Ovary (tissue), 10 donors: ENCODE measurements at regions of chr9 and their contacts with region 1.

Region 1: DNA sequence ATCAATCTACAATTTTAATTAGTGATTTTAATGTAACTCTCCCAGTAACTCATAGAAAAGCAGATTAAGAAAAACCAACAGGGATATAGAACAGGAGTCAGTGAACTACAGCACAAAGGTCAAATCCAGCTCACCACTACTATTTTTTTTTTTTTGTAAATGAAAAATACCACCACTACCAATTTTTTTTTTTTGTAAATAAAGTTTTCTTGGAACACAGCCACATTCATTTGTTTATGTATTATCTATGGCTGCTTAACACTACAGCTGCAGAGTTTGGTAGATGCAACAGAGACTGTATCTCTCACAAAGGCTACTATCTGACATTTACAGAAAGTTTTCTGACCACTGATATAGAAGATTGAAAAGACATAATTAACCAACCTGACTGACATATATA is 11.7 kb downstream of the ZNF510 start:
- DNase-seq: no peak
- H3K4me3 ChIP-seq: no peak overlapping the region
- H3K27ac ChIP-seq: no peak overlapping the region
- H3K4me1 ChIP-seq: no peaks in the 10 kb centered on the region
- H3K27me3 ChIP-seq: no peaks in the 10 kb centered on the region
- CTCF ChIP-seq: no peak
- EP300 ChIP-seq: no peak
- POLR2A ChIP-seq: no peak

Region 2: DNA sequence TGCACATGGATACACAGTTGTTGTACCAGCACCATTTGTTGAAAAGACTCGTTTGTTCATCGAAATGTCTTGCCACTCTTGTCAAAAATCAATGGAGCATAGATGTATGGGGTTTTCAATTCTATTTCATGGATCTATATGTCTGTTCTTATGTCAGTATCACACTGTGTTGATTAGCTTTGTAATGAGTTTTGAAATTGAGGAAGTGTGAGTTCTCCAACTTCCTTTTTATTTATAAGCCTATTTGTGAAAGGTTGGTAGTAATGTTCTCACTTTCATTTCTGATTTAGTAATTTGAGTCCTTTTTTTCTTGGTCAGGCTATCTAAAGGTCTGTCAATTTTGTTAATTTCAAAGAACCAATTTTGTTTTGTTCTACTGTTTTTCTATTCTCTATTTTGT is 14.4 kb before region 1 on chr9:
- intact Hi-C with region 1: loop called in 1 of 4 experiments (anchors 2 kb)
- DNase-seq: no peak
- H3K4me3 ChIP-seq: no peak overlapping the region
- H3K27ac ChIP-seq: no peak overlapping the region
- H3K4me1 ChIP-seq: no peaks in the 10 kb centered on the region
- H3K27me3 ChIP-seq: no peaks in the 10 kb centered on the region
- CTCF ChIP-seq: no peak
- EP300 ChIP-seq: no peak
- POLR2A ChIP-seq: no peak